ENCODE measurements at regions of chr2 and their contacts with region 1.

Region 1: DNA sequence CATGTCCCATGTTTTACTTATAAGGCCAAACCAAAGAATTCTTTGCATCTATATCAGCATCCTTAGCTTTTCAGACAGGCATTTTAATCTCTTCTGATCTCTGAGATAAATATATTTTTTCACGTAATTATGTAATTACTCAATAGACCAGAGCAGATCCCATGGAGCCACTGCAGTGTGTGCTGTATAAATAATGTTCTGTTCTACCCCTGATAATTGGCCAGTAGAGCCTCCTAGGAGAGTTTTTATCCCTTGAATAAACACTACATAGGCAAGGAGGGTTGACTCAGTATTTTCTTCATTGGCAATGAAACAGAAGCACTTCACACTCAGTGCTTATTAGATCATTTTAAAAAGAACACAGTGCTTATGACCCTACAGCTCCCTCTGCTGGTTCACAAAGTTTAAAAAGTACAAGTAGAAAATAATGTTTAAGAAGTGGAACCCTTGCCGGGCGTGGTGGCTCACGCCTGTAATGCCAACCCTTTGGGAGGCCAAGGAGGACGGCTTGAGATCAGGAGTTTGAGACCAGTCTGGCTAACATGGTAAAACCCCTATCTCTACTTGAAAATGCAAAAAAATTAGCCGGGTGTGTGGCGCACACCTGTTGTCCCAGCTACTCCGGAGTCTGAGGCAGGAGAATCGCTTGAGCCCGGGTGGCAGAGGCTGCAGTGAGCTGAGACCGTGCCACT is 91.9 kb downstream of the PPP1R1C start:
- DNase-seq: peak; percentile 64
- H3K4me3 ChIP-seq: no peak overlapping the region
- H3K27ac ChIP-seq: no peak overlapping the region
- H3K4me1 ChIP-seq: peaks cover 7% of the 10 kb centered on the region
- H3K27me3 ChIP-seq: no peaks in the 10 kb centered on the region
- CTCF ChIP-seq: peak; percentile 25 to 69

Region 2: GRCh38 chr2:181573140-181573736 is 504.4 kb before region 1 on chr2:
- CTCF ChIA-PET with region 1: no interaction called
- dilution Hi-C with region 1: no loop called
- in situ Hi-C with region 1: no loop called
- intact Hi-C with region 1: loop called (anchors 5 kb)
- DNase-seq: peak; percentile 12
- H3K4me3 ChIP-seq: no peak overlapping the region
- H3K27ac ChIP-seq: no peak overlapping the region
- H3K4me1 ChIP-seq: peaks cover 4% of the 10 kb centered on the region
- H3K27me3 ChIP-seq: no peaks in the 10 kb centered on the region
- CTCF ChIP-seq: peak; percentile 39 to 65

Region 3: GRCh38 chr2:181742922-181743722 is 334.5 kb before region 1 on chr2:
- CTCF ChIA-PET with region 1: no interaction called
- dilution Hi-C with region 1: no loop called
- in situ Hi-C with region 1: loop called in 1 of 2 experiments (anchors 10 kb)
- intact Hi-C with region 1: loop called (anchors 1 kb)
- DNase-seq: peak; percentile 55
- H3K4me3 ChIP-seq: no peak overlapping the region
- H3K27ac ChIP-seq: no peak overlapping the region
- H3K4me1 ChIP-seq: peaks cover 12% of the 10 kb centered on the region
- H3K27me3 ChIP-seq: no peaks in the 10 kb centered on the region
- CTCF ChIP-seq: peak; percentile 56 to 58

Region 4: DNA sequence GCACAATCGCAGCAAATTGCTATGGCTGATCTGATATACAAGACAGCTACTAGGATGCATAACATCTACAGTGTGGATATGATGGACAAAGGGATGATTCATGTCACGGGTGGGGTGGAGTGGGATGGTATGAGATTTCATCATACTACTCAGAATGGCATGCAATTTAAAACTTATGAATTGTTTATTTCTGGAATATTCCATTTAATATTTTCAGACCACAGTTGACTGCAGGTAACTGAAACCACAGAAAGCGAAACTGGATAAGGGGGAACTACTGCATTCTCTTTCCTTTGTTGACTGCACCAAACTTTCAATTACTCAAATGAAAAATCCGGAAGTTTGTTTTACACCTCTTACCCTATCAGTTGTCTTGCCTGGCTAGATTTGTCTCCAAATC is 302.9 kb before region 1 on chr2:
- CTCF ChIA-PET with region 1: no interaction called
- dilution Hi-C with region 1: loop called (anchors 25 kb)
- in situ Hi-C with region 1: no loop called
- intact Hi-C with region 1: no loop called
- DNase-seq: peak; percentile 72
- H3K4me3 ChIP-seq: no peak overlapping the region
- H3K27ac ChIP-seq: peak overlapping the region; percentile 34
- H3K4me1 ChIP-seq: peaks cover 43% of the 10 kb centered on the region
- H3K27me3 ChIP-seq: no peaks in the 10 kb centered on the region
- CTCF ChIP-seq: no peak

Region 5: GRCh38 chr2:181937473-181937872 is 140.1 kb before region 1 on chr2:
- CTCF ChIA-PET with region 1: no interaction called
- dilution Hi-C with region 1: no loop called
- in situ Hi-C with region 1: no loop called
- intact Hi-C with region 1: loop called (anchors 10 kb)
- DNase-seq: peak; percentile 11
- H3K4me3 ChIP-seq: no peak overlapping the region
- H3K27ac ChIP-seq: no peak overlapping the region
- H3K4me1 ChIP-seq: no peaks in the 10 kb centered on the region
- H3K27me3 ChIP-seq: no peaks in the 10 kb centered on the region
- CTCF ChIP-seq: no peak

Region 6: GRCh38 chr2:182117203-182117602 is 39.6 kb after region 1 on chr2:
- CTCF ChIA-PET with region 1: no interaction called
- dilution Hi-C with region 1: no loop called
- in situ Hi-C with region 1: no loop called
- intact Hi-C with region 1: no loop called
- DNase-seq: no peak
- H3K4me3 ChIP-seq: no peak overlapping the region
- H3K27ac ChIP-seq: no peak overlapping the region
- H3K4me1 ChIP-seq: no peaks in the 10 kb centered on the region
- H3K27me3 ChIP-seq: no peaks in the 10 kb centered on the region
- CTCF ChIP-seq: no peak

Region 7: DNA sequence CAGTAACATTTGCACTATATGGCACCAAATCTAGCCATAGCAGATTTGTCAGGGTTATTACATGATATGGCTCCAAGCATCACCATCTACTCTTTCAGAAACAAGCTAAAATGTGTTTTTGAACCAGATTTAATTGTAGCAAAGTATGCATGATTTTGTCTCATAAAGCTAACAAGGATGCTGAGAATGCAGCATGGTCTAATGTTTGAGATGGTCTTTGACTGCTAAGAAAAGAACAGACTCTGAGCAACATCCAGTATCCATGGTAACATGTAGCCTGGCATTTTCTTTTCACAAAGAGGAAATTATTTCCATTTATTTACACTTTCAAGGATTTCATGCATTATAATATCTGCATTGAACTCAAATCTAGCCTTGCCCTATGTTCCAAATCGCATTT is 142.7 kb after region 1 on chr2:
- CTCF ChIA-PET with region 1: no interaction called
- dilution Hi-C with region 1: no loop called
- in situ Hi-C with region 1: no loop called
- intact Hi-C with region 1: no loop called
- DNase-seq: no peak
- H3K4me3 ChIP-seq: no peak overlapping the region
- H3K27ac ChIP-seq: no peak overlapping the region
- H3K4me1 ChIP-seq: no peaks in the 10 kb centered on the region
- H3K27me3 ChIP-seq: peaks cover 1% of the 10 kb centered on the region
- CTCF ChIP-seq: no peak